ENCODE measurements at regions of chr18 and their contacts with region 1.

Region 1: GRCh38 chr18:49725809-49726674 is 87.3 kb downstream of the ACAA2 start:
- DNase-seq: no peak
- ATAC-seq: no peak
- H3K4me3 ChIP-seq: no peak overlapping the region
- H3K4me3 Mint-ChIP-seq: no peak overlapping the region
- H3K27ac ChIP-seq: no peak overlapping the region
- H3K27ac Mint-ChIP-seq: no peak overlapping the region
- H3K4me1 ChIP-seq: peaks cover 0 to 4% of the 10 kb centered on the region in 2 experiments
- H3K4me1 Mint-ChIP-seq: peaks cover 8 to 10% (median 9%) of the 10 kb centered on the region in 3 donors
- H3K27me3 ChIP-seq: peaks cover 3 to 19% of the 10 kb centered on the region in 2 experiments
- H3K27me3 Mint-ChIP-seq: peaks cover 15 to 25% of the 10 kb centered on the region in 2 donors

Region 2: DNA sequence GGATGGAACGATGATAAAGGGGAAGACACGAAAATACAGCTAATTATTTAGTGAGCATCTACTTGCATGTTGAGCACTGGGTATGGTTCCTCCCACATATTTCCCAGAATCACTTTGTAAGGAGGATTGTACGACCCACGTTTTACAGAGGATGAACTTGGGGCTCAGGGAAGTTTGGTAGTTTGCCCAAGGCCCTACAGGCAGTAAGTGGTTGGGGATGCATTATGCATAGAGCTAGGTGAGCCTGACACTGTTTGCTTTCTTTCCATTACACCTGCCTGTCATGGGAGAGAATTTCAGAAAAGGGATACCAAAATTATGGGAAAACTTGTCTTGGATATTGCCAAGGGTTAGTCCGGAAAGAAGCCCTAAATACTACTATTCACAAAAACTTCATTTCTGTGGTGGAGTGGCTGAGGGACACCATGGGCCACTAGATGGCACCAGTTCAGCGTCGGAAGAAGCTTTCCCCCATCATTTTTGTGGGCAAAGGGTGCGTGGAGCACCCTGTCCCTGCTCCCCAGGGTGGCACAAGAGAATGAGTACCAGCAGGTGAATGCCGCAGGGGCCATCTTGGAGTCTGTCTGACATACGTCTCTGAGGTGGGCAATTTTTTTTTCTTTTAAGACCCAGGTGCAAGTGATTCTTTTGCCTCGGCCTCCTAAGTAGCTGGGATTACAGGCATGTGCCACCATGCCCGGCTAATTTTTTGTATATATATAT is 215.5 kb before region 1 on chr18:
- CTCF ChIA-PET with region 1: no interaction called
- POLR2A ChIA-PET with region 1: interaction called in 1 of 2 experiments, 13 read pairs
- DNase-seq: peak in 34 of 35 experiments; percentile 10 to 78 (median 36)
- ATAC-seq: peak; percentile 66 to 74 (median 70)
- H3K4me3 ChIP-seq: no peak overlapping the region
- H3K4me3 Mint-ChIP-seq: no peak overlapping the region
- H3K27ac ChIP-seq: no peak overlapping the region
- H3K27ac Mint-ChIP-seq: no peak overlapping the region
- H3K4me1 ChIP-seq: no peaks in the 10 kb centered on the region
- H3K4me1 Mint-ChIP-seq: no peaks in the 10 kb centered on the region
- H3K27me3 ChIP-seq: peaks cover 2 to 14% of the 10 kb centered on the region in 2 experiments
- H3K27me3 Mint-ChIP-seq: peaks cover 6 to 25% of the 10 kb centered on the region in 2 donors

Region 3: DNA sequence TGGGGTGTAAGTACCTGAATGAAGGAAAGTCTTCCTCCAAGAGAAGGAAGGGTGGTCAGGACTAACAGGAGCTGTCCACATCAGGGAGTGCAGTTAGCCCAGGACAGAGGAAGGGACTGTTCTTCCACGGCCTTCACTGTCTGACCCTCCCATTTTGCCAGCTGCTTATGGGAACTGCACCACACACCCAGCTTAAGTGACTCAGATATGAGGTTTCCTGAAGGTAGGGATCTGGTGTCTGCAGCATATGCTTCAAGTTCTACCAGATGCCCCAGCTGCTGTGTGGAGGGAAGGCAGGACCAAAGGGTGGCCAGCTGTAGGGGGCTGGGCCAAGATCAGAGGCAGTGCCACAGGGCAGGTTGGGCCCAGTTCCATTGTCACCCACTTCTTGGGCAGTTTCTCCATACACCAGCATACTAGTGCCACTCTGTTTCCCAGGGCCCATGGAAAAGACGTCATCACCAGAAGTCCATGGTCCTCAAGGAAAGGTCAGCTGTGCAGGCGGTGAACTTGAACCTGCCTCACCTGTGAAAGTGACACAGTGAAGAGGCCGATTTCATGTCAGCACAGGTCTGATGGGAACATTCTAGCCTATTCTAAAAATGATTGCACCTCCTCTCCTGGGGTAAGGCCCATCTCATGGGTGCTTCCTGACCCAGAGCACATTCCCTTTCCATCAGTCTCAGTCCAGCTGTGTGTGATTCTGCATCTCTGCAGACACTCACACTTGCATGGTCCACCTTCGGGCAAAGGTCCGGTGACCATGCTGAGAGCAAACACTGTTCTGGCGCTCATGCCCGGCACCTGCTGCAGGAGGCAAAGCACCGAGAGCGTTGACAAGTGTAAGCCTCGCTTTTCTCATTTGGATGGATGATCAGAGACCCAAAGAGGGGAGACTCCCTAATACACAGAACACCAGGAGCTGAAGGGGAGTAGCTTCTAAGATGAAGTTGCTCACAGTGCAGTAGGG is 19.3 kb after region 1 on chr18:
- CTCF ChIA-PET with region 1: interaction called in 1 of 2 experiments, 12 read pairs
- POLR2A ChIA-PET with region 1: no interaction called
- DNase-seq: no peak
- ATAC-seq: no peak
- H3K4me3 ChIP-seq: no peak overlapping the region
- H3K4me3 Mint-ChIP-seq: no peak overlapping the region
- H3K27ac ChIP-seq: no peak overlapping the region
- H3K27ac Mint-ChIP-seq: no peak overlapping the region
- H3K4me1 ChIP-seq: no peaks in the 10 kb centered on the region
- H3K4me1 Mint-ChIP-seq: peaks cover 0 to 3% (median 0%) of the 10 kb centered on the region in 3 donors
- H3K27me3 ChIP-seq: peaks cover 0 to 14% of the 10 kb centered on the region in 2 experiments
- H3K27me3 Mint-ChIP-seq: peaks cover 8 to 13% of the 10 kb centered on the region in 2 donors